ENCODE measurements at regions of chr9 and their contacts with region 1.

Region 1: GRCh38 chr9:134641173-134641985 is at the start of gene COL5A1:
- DNase-seq: peak; percentile 87
- H3K4me3 ChIP-seq: peak within 1 kb of the TSS; percentile 96
- H3K27ac ChIP-seq: peak within 1 kb of the TSS; percentile 52
- H3K27me3 ChIP-seq: no peaks in the 10 kb centered on the region
- CTCF ChIP-seq: peak; percentile 8

Region 2: DNA sequence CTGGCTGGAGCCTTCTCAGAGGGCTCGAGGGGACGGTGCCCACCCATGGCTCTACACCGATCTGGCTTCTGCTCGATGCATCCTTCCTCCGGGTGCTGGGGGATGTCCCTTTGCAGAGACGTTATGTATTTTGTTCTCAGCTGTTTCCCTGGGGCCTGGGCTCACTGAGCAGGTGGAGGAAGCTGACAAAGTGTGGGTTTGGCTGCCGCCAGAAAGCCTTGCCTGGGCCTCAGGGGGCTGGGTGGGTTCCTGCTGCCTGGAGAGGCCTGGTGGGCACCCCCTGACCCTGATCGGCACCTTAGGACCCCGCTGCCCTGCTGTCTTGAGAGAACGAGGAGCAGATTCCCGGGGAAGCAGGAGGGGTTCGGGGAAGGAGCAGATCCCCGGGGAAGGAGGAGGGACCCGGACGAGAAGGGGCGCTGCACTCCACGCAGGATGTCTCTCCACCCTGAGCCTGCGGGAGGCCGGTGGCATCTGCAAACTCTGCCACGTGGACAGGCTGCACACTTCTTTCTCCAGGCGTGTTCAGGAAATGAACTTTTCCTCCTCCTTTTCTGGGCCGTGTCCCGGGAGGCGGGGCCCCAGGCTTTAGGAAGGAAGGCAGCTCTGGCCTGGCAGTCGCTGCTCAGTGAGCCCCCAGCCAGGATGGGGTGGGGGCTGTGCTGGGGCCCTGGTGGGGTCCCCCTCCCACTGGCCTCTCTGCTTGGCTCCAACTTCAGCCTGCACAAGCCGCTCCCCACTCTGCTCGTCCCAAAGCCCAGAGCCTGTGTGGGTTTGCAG is 166.2 kb before region 1 on chr9:
- in situ Hi-C with region 1: loop called (anchors 25 kb)
- DNase-seq: peak; percentile 64
- H3K4me3 ChIP-seq: no peak overlapping the region
- H3K27ac ChIP-seq: peak overlapping the region; percentile 35
- H3K27me3 ChIP-seq: no peaks in the 10 kb centered on the region
- CTCF ChIP-seq: peak; percentile 13

Region 3: GRCh38 chr9:134564431-134565170 is 76.8 kb before region 1 on chr9:
- in situ Hi-C with region 1: loop called (anchors 10 kb)
- DNase-seq: peak; percentile 71
- H3K4me3 ChIP-seq: no peak overlapping the region
- H3K27ac ChIP-seq: no peak overlapping the region
- H3K27me3 ChIP-seq: no peaks in the 10 kb centered on the region
- CTCF ChIP-seq: no peak

Region 4: DNA sequence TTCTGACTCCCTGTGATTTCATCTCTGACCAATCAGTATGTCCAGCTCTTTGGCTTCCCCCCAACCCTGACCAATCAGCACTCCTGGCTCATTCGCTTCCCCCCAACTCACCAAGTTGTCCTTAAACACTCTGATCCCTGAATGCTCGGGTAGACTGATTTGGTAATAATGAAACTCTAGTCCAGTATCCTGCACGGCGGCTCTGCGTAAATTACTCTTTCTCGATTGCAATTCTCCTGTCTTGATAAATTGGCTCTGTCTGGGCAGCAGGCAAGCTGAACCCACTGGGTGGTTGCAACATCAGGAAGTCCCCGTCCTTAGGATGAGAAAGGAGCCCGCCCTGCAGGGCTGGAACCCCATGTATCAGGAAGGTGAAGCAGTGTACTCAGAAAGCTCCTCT is 249.7 kb after region 1 on chr9:
- in situ Hi-C with region 1: no loop called
- DNase-seq: no peak
- H3K4me3 ChIP-seq: no peak overlapping the region
- H3K27ac ChIP-seq: no peak overlapping the region
- H3K27me3 ChIP-seq: no peaks in the 10 kb centered on the region
- CTCF ChIP-seq: no peak

Measured in brain microvascular endothelial cell (primary cell).